MCF 10A (cell line): ENCODE measurements at regions of chr1 and their contacts with region 1.

Region 1: DNA sequence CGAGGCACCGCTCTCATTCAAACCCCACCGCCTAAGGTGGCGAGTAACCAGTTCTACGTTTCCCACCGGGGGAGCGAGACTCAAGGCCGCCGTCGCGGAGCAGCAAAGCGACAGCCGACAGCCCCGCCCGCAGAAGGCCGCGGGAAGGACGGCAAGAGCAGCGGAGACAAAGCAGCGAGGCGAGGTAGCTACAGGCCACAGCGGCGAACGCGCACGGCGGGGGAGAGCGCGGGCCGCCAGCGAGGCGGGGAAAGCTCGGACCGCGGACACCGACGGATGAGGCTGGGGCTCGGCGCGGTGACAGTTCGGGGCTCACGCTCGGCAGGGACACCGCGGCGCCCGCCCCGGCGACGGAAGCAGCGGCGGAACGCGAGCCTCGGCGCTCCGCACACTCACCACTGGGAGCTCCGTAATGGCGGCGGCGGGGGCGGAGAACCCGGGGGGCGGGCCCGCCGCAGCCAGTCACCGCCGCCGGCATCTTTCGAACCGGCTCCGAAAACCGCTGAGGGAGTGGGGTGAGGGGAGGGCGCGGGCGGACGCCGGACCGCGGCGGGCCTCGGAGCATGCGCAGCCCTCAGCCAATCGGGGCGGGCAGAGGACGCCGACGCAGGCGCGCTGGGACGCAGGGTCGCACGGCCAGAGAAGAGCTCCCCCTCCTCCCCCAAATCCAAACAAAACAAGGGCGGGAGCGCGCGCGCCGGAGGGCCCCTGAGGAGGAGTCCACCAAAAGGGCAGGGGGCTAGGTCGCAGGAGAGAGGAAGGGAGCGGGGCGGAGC is 666 bp downstream of the HP1BP3 start:
- DNase-seq: peak; percentile 93
- H3K4me3 Mint-ChIP-seq: peak overlapping the region; percentile 95
- H3K27ac Mint-ChIP-seq: peak overlapping the region; percentile 95
- H3K4me1 Mint-ChIP-seq: peaks cover 10% of the 10 kb centered on the region
- H3K27me3 Mint-ChIP-seq: no peaks in the 10 kb centered on the region
- CTCF ChIP-seq: no peak

Region 2: DNA sequence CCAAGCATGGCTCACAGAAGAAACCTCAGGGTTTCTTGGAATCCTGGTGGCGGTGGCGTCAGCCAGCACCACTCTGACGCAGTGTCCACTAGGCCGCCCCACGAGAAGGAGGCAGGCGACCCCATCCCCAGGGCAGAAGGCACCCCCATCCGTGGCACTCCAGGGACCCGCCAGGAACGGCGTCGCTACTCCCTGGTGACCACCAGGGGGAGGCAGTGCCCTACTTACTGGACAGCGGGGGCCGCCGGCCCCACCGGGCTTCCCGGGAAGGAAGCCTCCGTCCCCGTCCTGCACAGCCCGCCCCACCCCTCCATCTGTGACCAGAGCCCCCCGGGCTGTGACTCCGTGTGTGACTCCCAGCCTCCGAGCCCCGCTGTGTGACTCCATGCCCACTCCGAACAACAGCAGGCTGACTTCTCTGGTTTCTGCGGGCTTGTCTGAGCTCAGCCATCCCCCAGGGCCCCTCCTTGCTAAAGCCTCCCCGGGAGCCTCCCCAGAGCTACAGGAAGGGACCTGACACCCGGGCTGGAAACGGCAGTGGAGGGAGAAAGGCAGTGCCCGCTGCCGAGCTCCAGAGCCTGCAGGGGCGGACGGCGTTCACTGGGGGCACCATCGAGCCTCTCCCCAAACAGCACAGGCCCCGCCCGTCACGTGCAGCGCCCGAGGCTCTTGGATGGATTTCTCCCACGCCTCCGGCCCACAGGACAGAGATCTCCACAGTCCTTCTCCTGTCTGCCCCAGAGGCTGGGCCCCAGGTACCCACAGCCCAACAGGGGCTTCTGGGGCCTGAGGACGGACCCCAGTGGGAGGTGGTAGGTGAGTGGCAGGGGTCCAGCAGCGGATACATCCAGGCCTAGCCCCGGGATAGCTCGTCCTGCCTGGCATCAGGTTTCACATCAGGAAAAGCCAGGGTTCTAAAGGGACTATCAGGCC is 89.8 kb before region 1 on chr1:
- CTCF ChIA-PET with region 1: interaction called, 4 read pairs
- POLR2A ChIA-PET with region 1: interaction called, 19 read pairs
- intact Hi-C with region 1: no loop called
- DNase-seq: peak; percentile 86
- H3K4me3 Mint-ChIP-seq: peak overlapping the region; percentile 82
- H3K27ac Mint-ChIP-seq: peak overlapping the region; percentile 76
- H3K4me1 Mint-ChIP-seq: peaks cover 11% of the 10 kb centered on the region
- H3K27me3 Mint-ChIP-seq: no peaks in the 10 kb centered on the region
- CTCF ChIP-seq: peak; percentile 94

Region 3: GRCh38 chr1:20717452-20718342 is 68.7 kb before region 1 on chr1 and contains the start of gene KIF17:
- CTCF ChIA-PET with region 1: no interaction called
- POLR2A ChIA-PET with region 1: no interaction called
- intact Hi-C with region 1: no loop called
- DNase-seq: no peak
- H3K4me3 Mint-ChIP-seq: no peak within 1 kb of the TSS
- H3K27ac Mint-ChIP-seq: no peak within 1 kb of the TSS
- H3K4me1 Mint-ChIP-seq: no peaks in the 10 kb centered on the region
- H3K27me3 Mint-ChIP-seq: peaks cover 10% of the 10 kb centered on the region
- CTCF ChIP-seq: no peak
- total RNA-seq, gene KIF17: 0.19 and 1.9 TPM in 2 replicates

Region 4: GRCh38 chr1:20775700-20776099 is 10.7 kb before region 1 on chr1:
- CTCF ChIA-PET with region 1: interaction called, 4 read pairs
- POLR2A ChIA-PET with region 1: interaction called, 26 read pairs
- intact Hi-C with region 1: no loop called
- DNase-seq: peak; percentile 21
- H3K4me3 Mint-ChIP-seq: no peak overlapping the region
- H3K27ac Mint-ChIP-seq: no peak overlapping the region
- H3K4me1 Mint-ChIP-seq: peaks cover 22% of the 10 kb centered on the region
- H3K27me3 Mint-ChIP-seq: no peaks in the 10 kb centered on the region
- CTCF ChIP-seq: no peak

Region 5: DNA sequence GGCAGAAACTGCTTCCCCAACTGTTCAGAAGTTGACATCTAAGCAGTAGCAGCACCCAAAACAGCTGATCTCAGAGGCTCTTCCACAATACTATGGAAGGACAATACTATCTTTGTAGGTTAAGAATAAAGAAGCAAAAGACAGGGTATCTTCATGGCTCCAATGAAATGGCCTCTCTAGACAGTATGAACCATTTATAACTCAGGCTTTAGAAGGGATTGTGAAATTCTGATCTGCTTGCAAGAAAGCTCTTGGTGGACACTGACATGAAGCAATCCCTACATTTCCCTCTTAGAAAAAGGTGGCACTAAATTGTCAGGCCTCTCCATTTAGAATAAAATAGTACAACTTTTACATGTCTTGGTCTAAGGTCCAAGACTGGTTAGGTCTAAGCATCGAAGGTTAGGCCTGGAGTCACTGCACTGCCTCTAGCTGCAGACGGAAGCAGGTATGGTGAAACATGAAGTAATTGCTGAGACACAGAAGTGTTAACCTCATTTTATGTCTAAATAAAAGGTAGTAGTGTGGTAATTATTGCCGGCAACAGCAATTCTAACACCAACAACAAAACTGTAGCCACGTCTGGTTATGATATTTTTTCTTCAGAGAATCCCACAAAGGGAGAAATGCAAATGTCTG is 51.2 kb after region 1 on chr1:
- CTCF ChIA-PET with region 1: no interaction called
- POLR2A ChIA-PET with region 1: interaction called, 12 read pairs
- intact Hi-C with region 1: no loop called
- DNase-seq: no peak
- H3K4me3 Mint-ChIP-seq: no peak overlapping the region
- H3K27ac Mint-ChIP-seq: no peak overlapping the region
- H3K4me1 Mint-ChIP-seq: peaks cover 13% of the 10 kb centered on the region
- H3K27me3 Mint-ChIP-seq: no peaks in the 10 kb centered on the region
- CTCF ChIP-seq: no peak

Region 6: GRCh38 chr1:21200767-21201166 is 414.3 kb after region 1 on chr1:
- CTCF ChIA-PET with region 1: interaction called, 6 read pairs
- POLR2A ChIA-PET with region 1: interaction called, 20 read pairs
- intact Hi-C with region 1: loop called (anchors 5 kb)
- DNase-seq: peak; percentile 56
- H3K4me3 Mint-ChIP-seq: no peak overlapping the region
- H3K27ac Mint-ChIP-seq: no peak overlapping the region
- H3K4me1 Mint-ChIP-seq: peaks cover 5% of the 10 kb centered on the region
- H3K27me3 Mint-ChIP-seq: no peaks in the 10 kb centered on the region
- CTCF ChIP-seq: no peak